ENCODE measurements at regions of chr10 and their contacts with region 1.

Region 1: DNA sequence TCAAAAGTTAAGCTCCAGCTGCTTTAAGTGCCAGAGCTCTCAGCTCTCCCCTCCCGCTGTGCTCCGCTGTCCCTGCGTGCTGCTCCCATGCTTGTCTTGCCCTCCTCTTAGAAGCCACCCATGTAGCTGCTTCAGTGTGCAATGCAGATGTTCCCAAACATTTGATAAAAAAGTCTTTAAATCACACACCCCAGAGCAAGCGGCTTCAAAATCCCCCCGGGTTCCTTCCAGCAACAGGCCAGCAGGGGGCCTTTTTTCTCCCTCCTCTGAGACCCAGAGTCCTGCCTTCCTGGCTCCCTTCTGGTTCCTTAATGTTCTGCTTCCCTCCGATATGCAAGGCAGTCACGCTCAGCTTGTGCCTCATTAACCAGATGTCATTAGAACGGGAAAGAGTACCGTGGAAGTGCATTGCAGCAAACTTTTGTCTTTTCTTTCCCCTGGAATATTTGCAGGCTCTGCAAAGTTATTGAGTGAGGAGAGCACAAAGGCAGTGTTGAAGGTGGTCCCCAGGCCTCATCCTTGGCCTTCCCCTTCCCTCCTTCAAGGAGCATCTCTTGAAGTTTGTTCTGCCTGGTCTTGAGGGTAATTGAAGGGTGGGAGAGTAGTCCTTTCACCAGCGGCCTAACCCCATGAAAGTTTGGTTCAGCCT is 25.5 kb downstream of the LDB3 start:
- DNase-seq: peak; percentile 47 to 67 (median 66)
- H3K4me3 ChIP-seq: no peak overlapping the region
- H3K27ac ChIP-seq: no peak overlapping the region
- H3K4me1 ChIP-seq: no peaks in the 10 kb centered on the region
- H3K27me3 ChIP-seq: peaks cover 0 to 11% (median 0%) of the 10 kb centered on the region in 5 experiments

Region 2: GRCh38 chr10:86648706-86649427 is 45.0 kb before region 1 on chr10:
- CTCF ChIA-PET with region 1: no interaction called
- POLR2A ChIA-PET with region 1: no interaction called
- DNase-seq: no peak
- H3K4me3 ChIP-seq: no peak overlapping the region
- H3K27ac ChIP-seq: no peak overlapping the region
- H3K4me1 ChIP-seq: no peaks in the 10 kb centered on the region
- H3K27me3 ChIP-seq: peaks cover 0 to 8% (median 0%) of the 10 kb centered on the region in 5 experiments

Region 3: GRCh38 chr10:86706401-86706841 is 12.6 kb after region 1 on chr10:
- CTCF ChIA-PET with region 1: interaction called, 15 read pairs
- POLR2A ChIA-PET with region 1: interaction called, 3 read pairs
- DNase-seq: no peak
- H3K4me3 ChIP-seq: no peak overlapping the region
- H3K27ac ChIP-seq: no peak overlapping the region
- H3K4me1 ChIP-seq: peaks cover 0 to 4% (median 3%) of the 10 kb centered on the region in 4 experiments
- H3K27me3 ChIP-seq: peaks cover 0 to 3% (median 0%) of the 10 kb centered on the region in 5 experiments

Region 4: GRCh38 chr10:86727470-86727869 is 33.6 kb after region 1 on chr10:
- CTCF ChIA-PET with region 1: no interaction called
- POLR2A ChIA-PET with region 1: no interaction called
- DNase-seq: no peak
- H3K4me3 ChIP-seq: no peak overlapping the region
- H3K27ac ChIP-seq: no peak overlapping the region
- H3K4me1 ChIP-seq: no peaks in the 10 kb centered on the region
- H3K27me3 ChIP-seq: peaks cover 0 to 11% (median 7%) of the 10 kb centered on the region in 5 experiments

Region 5: GRCh38 chr10:86899670-86900276 is 205.9 kb after region 1 on chr10:
- CTCF ChIA-PET with region 1: interaction called, 47 read pairs
- POLR2A ChIA-PET with region 1: no interaction called
- DNase-seq: peak; percentile 66 to 76 (median 68)
- H3K4me3 ChIP-seq: no peak overlapping the region
- H3K27ac ChIP-seq: no peak overlapping the region
- H3K4me1 ChIP-seq: no peaks in the 10 kb centered on the region
- H3K27me3 ChIP-seq: peaks cover 0 to 26% (median 3%) of the 10 kb centered on the region in 5 experiments